ENCODE measurements at regions of chr9 and their contacts with region 1.

Region 1: GRCh38 chr9:19456996-19457692 is 48.3 kb downstream of the ACER2 start:
- DNase-seq: peak in 1 of 2 donors; percentile 86
- H3K4me3 ChIP-seq: peak overlapping the region in 1 of 2 donors; percentile 38
- H3K27ac ChIP-seq: peak overlapping the region; percentile 68 to 76
- H3K4me1 ChIP-seq: peaks cover 4 to 6% of the 10 kb centered on the region in 2 donors
- H3K27me3 ChIP-seq: no peaks in the 10 kb centered on the region
- CTCF ChIP-seq: peak; percentile 90 to 94 (median 92)

Region 2: DNA sequence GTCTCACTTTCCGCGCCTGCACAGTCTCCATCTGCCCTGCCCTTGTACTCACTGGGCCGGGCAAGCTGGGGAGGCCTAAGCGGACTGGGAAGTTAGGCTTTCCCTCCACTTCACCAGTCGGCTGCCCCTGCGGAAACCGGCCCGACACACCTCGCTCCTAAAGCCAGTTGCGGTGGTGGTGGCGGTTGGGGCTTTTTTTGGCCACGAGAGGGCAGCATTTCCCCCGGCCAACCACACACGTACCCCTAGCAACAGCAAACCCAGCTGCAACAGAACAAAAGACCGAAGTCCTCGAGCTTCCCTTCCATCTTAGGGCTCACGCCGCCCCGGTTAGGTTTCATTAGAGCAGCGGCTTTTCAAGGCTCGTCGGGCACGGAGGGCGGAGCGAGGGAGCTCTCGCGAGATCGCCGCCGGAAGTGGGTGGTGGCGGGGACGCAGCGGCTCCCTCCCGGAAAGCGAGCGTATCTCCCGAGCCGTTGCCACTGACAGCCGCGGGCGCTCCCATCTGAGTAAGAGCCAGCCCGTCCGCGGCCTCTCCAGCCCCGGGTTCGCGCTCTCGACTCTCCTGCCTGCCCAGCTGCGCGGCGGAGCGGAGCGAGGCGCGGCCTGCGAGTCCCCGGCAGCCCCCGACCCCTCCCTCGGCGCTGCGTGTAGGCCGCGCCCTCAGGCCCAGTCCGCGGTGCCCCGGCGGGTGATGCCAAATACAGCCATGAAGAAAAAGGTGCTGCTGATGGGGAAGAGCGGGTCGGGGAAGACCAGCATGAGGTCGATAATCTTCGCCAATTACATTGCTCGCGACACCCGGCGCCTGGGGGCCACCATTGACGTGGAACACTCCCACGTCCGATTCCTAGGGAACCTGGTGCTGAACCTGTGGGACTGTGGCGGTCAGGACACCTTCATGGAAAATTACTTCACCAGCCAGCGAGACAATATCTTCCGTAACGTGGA is 407.9 kb before region 1 on chr9 and contains the start of gene RRAGA:
- intact Hi-C with region 1: loop called (anchors 1 kb)
- DNase-seq: peak; percentile 70 to 97
- H3K4me3 ChIP-seq: peak within 1 kb of the TSS; percentile 77 to 89
- H3K27ac ChIP-seq: peak within 1 kb of the TSS; percentile 98
- H3K4me1 ChIP-seq: peaks cover 8 to 14% of the 10 kb centered on the region in 2 donors
- H3K27me3 ChIP-seq: no peaks in the 10 kb centered on the region
- CTCF ChIP-seq: peak; percentile 81 to 87 (median 86)
- total RNA-seq, gene RRAGA: 57.3 TPM

Region 3: GRCh38 chr9:19102631-19103345 is 354.4 kb before region 1 on chr9 and contains the start of gene HAUS6:
- intact Hi-C with region 1: loop called (anchors 1 kb)
- DNase-seq: peak; percentile 83 to 99
- H3K4me3 ChIP-seq: peak within 1 kb of the TSS; percentile 67 to 74
- H3K27ac ChIP-seq: peak within 1 kb of the TSS; percentile 85 to 87
- H3K4me1 ChIP-seq: peaks cover 10 to 11% of the 10 kb centered on the region in 2 donors
- H3K27me3 ChIP-seq: no peaks in the 10 kb centered on the region
- CTCF ChIP-seq: peak in 2 of 3 experiments; percentile 41 to 69
- total RNA-seq, gene HAUS6: 3.4 TPM

Region 4: DNA sequence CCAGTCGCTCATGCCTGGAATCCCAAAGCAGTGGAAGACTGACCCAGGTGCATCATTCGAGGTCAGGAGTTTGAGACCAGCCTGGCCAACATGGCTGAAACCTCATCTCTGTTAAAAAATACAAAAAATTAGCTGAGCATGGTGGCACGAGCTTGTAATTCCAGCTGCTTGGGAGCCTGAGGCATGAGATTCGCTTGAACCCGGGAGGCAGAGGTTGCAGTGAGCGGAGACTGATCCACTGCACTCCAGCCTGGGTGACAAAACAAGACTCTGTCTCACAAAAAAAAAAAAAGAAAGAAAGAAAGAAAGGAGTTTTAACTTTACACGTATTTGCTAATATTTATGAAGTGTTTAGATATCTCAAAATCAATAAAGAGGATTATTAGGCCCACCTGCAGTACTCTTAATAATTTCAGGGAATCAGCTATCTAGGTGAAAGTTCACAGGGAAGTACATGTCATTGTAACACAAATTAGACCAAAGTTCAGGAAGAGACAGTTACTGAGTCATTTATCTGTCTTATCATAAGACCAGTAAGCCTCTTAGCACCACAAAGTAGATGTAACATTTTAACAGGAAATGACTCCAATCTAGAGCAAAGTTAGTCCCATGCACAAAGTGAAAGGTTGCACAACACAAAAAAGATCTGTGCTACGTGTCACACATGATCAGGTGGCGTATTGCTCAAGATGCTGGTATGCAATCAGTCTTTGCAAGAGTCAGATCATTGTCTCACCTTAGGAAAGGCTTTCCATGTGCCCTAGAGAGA is 295.7 kb before region 1 on chr9:
- intact Hi-C with region 1: no loop called
- DNase-seq: peak in 1 of 2 donors; percentile 84
- H3K4me3 ChIP-seq: no peak overlapping the region
- H3K27ac ChIP-seq: peak overlapping the region; percentile 37 to 55
- H3K4me1 ChIP-seq: peaks cover 0 to 4% of the 10 kb centered on the region in 2 donors
- H3K27me3 ChIP-seq: no peaks in the 10 kb centered on the region
- CTCF ChIP-seq: no peak

Region 5: GRCh38 chr9:19184144-19184917 is 272.8 kb before region 1 on chr9:
- intact Hi-C with region 1: loop called (anchors 2 kb)
- DNase-seq: peak; percentile 90 to 96
- H3K4me3 ChIP-seq: peak overlapping the region in 1 of 2 donors; percentile 10
- H3K27ac ChIP-seq: peak overlapping the region; percentile 93 to 96
- H3K4me1 ChIP-seq: peaks cover 10 to 18% of the 10 kb centered on the region in 2 donors
- H3K27me3 ChIP-seq: no peaks in the 10 kb centered on the region
- CTCF ChIP-seq: no peak

Region 6: GRCh38 chr9:19379697-19380046 is 77.5 kb before region 1 on chr9:
- intact Hi-C with region 1: loop called (anchors 1 kb)
- DNase-seq: no peak
- H3K4me3 ChIP-seq: peak overlapping the region; percentile 69 to 73
- H3K27ac ChIP-seq: peak overlapping the region; percentile 88 to 91
- H3K4me1 ChIP-seq: peaks cover 0 to 24% of the 10 kb centered on the region in 2 donors
- H3K27me3 ChIP-seq: no peaks in the 10 kb centered on the region
- CTCF ChIP-seq: no peak

Region 7: DNA sequence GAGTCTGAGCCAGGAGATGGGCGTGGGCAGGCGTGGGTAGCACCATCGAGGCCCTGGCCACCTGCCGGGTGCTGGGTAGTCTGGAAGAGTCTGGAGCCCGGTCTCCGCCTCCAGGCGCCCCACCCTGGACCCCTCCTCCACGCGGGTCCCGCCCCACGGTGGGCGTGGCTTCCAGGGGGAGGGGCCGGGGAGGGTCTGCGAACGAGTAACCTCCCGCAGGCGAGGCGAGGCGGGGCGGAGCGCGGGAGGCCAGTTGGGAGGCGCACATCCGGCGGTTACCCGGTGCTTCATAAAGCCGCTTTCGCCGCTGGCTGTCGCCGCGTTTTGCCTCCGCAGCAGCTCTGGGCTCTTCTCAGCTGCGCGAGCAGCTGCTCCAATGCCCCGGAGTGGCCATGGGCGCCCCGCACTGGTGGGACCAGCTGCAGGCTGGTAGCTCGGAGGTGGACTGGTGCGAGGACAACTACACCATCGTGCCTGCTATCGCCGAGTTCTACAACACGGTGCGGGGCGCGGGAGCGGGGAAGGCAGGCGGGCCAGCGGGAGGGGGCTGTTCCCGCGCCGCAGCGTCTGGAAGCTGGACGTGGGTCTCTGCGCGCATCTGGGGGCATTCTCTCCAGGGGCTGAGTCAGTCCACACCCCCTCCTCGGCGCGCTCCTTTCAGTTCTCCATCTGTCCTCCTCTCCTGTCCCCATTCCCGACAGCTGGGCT is 48.3 kb before region 1 on chr9 and contains the start of gene ACER2:
- intact Hi-C with region 1: loop called (anchors 1 kb)
- DNase-seq: peak; percentile 79 to 97
- H3K4me3 ChIP-seq: peak within 1 kb of the TSS; percentile 92 to 94
- H3K27ac ChIP-seq: peak within 1 kb of the TSS; percentile 88 to 89
- H3K4me1 ChIP-seq: peaks cover 0 to 12% of the 10 kb centered on the region in 2 donors
- H3K27me3 ChIP-seq: no peaks in the 10 kb centered on the region
- CTCF ChIP-seq: peak in 2 of 3 experiments; percentile 4 to 18
- total RNA-seq, gene ACER2: 1.4 TPM

Region 8: DNA sequence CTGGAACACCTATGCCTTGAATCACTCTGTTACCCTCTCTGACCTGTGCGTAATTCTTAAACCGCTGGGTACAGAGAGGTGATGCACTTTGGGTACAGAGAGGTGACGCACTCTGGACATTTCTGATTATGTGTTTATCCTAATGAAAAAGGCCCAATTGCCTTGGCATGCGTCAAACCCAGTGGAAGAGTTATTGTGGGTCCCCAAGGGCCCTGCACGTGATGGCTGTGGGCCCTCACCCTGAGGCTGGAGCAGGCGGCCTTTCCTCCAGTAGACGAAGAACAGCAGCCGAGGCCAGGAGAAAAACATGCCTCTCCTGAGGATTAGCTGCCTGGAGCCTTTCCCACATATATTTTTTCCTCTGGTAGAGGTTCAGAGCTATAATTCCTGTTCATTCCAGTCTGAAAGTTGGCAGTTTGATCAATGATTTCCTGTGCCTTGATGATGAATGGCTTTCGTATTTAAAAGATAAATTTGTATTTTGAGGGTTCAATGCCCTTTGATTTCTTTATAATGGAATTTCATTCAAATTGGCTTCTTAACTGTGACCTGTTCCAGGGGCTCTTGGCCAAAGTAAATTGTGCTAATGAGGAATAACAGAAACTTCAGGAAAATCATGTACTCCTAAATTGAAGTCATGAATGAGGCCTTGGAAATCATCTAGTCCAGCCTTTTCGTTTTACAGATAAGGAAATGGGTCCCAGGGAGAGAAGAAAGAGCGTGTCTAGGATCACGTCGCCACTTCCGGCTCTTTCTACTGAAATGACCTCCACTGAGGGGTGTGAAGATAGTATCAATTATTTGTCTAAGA is 25.6 kb before region 1 on chr9:
- intact Hi-C with region 1: loop called (anchors 2 kb)
- DNase-seq: peak; percentile 16 to 91
- H3K4me3 ChIP-seq: no peak overlapping the region
- H3K27ac ChIP-seq: peak overlapping the region; percentile 79 to 85
- H3K4me1 ChIP-seq: peaks cover 0 to 22% of the 10 kb centered on the region in 2 donors
- H3K27me3 ChIP-seq: no peaks in the 10 kb centered on the region
- CTCF ChIP-seq: no peak

Region 9: DNA sequence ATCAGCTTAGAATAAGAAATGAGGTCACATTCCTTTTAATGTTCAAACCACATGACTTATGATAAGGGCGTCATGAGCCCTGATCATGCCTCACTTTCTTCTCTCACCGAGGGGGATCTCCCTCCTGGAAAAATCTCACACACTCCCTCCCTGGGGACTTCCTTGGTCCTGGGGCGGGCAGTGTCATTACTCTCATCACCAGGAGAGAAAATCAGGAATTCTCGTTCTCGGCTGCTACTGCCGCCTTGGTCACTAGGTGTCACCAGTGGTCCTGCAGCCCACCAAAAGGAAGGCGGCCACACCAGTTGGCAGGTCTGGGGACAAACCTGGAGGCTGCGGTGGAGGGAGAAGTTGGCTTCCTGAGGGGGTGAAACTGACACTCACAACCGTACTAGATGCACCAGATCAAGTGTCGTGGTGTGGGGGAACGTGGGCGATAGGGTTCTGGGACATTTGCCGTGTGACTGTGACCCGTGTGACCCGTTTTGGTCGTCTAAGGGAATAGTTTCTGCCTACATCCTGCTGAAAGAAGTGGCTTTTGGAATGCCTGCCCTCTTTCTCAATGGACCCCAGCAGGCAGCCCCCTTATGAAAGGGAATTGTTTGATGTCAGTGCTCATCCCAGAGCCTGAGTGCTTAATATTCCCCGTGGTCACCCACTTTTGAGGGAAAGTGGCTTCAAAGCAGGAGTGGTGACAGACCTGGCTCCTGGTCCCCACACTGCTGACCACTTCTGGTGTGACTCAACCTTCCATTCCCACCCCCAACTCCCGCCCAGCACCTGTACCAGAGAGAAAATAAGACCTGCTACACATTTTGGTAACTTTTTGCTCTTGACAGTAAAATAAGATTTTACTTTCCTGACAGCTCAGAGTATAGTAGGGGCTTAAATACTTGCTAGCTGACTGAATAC is 14.8 kb after region 1 on chr9:
- intact Hi-C with region 1: no loop called
- DNase-seq: peak in 1 of 2 donors; percentile 81
- H3K4me3 ChIP-seq: peak overlapping the region; percentile 14 to 43
- H3K27ac ChIP-seq: no peak overlapping the region
- H3K4me1 ChIP-seq: peaks cover 0 to 7% of the 10 kb centered on the region in 2 donors
- H3K27me3 ChIP-seq: no peaks in the 10 kb centered on the region
- CTCF ChIP-seq: peak; percentile 27 to 87 (median 83)

Region 10: DNA sequence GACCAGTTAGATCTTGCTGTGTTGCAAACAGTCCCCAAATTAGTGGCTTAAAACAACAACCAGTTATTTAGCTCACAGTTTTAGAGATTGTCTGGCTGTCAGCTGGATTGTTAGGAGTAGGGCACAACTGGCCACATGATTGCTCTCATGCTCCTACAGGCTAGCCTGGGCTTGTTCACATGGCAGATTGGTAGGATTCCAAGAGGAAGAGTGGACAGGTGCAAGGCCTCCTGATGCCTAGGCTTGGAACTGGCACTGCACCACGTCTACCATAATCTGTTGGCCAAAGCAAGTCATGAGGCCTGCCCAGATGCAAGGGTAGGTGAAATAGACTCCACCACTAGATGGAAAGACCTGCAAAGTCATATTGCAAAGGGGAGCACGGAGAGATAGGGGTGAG is 28.0 kb after region 1 on chr9:
- intact Hi-C with region 1: no loop called
- DNase-seq: no peak
- H3K4me3 ChIP-seq: no peak overlapping the region
- H3K27ac ChIP-seq: no peak overlapping the region
- H3K4me1 ChIP-seq: no peaks in the 10 kb centered on the region
- H3K27me3 ChIP-seq: no peaks in the 10 kb centered on the region
- CTCF ChIP-seq: no peak